ENCODE measurements at regions of chr15 and their contacts with region 1.

Region 1: GRCh38 chr15:84716036-84716799 is at the start of gene SEC11A:
- DNase-seq: peak; percentile 91 to 95
- H3K4me3 ChIP-seq: peak within 1 kb of the TSS; percentile 67
- H3K27ac ChIP-seq: peak within 1 kb of the TSS; percentile 85
- H3K4me1 ChIP-seq: peaks cover 15% of the 10 kb centered on the region
- H3K27me3 ChIP-seq: no peaks in the 10 kb centered on the region
- CTCF ChIP-seq: no peak
- total RNA-seq, gene SEC11A: 146 and 174 TPM in 2 replicates

Region 2: DNA sequence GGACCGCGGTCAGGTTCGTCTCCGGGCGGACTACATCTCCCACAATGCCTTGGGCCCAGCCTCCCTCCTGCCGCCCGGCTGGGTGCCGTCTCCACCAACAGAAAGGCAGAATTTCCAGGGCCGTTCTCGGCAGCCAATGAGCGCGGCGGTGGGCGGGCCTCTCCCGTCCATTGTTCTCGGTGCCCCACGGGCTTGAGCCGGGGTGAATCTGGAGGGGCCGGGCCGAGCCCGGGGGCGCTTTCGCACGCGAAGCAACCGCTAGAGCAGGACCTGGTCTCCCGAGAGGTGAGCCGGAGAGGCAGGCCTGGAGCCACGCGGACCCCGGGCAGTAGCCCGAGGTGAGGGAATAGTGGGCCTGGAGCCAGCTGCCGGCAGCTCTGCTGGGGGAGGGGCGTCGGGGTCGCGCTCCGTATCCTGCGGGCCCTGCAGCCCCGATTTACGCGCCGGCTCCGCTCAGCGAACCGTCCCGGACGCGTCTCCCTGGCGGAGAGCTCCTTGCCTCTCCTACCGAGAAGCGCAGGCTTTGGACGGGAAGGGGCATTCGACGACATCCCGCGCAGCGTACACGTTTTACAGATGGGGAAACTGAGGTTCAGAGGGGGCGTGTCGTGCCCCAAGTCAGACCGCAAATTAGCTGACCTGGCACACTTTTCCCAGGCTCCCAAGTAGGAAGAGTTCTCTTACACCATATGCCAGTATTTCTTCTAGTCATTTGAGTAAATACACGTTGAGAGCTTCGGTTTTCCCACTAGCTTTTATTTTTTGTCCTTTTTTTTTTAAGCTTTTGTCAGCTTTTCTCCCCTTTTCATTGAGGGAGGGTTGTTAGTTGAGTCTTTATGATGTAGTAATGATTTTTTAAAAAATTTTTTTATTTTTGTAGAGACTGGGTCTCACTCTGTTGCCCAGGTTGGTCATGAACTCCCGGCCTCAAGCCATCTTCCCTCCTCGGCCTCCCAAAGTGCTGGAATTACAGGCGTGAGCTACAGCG is 115.1 kb before region 1 on chr15 and contains the start of gene ZSCAN2:
- CTCF ChIA-PET with region 1: no interaction called
- POLR2A ChIA-PET with region 1: no interaction called
- intact Hi-C with region 1: loop called (anchors 5 kb)
- DNase-seq: peak; percentile 87 to 94
- H3K4me3 ChIP-seq: peak within 1 kb of the TSS; percentile 88
- H3K27ac ChIP-seq: peak within 1 kb of the TSS; percentile 24; the same call in 1 of the 2 replicates
- H3K4me1 ChIP-seq: peaks cover 6% of the 10 kb centered on the region
- H3K27me3 ChIP-seq: no peaks in the 10 kb centered on the region
- CTCF ChIP-seq: no peak
- total RNA-seq, gene ZSCAN2: 9.7 and 11.3 TPM in 2 replicates

Region 3: GRCh38 chr15:84633311-84634227 is 82.6 kb before region 1 on chr15:
- CTCF ChIA-PET with region 1: no interaction called
- POLR2A ChIA-PET with region 1: interaction called, 10 read pairs
- intact Hi-C with region 1: no loop called
- DNase-seq: peak; percentile 46 to 63
- H3K4me3 ChIP-seq: peak overlapping the region; percentile 70
- H3K27ac ChIP-seq: no peak overlapping the region
- H3K4me1 ChIP-seq: peaks cover 33% of the 10 kb centered on the region
- H3K27me3 ChIP-seq: no peaks in the 10 kb centered on the region
- CTCF ChIP-seq: no peak

Region 4: DNA sequence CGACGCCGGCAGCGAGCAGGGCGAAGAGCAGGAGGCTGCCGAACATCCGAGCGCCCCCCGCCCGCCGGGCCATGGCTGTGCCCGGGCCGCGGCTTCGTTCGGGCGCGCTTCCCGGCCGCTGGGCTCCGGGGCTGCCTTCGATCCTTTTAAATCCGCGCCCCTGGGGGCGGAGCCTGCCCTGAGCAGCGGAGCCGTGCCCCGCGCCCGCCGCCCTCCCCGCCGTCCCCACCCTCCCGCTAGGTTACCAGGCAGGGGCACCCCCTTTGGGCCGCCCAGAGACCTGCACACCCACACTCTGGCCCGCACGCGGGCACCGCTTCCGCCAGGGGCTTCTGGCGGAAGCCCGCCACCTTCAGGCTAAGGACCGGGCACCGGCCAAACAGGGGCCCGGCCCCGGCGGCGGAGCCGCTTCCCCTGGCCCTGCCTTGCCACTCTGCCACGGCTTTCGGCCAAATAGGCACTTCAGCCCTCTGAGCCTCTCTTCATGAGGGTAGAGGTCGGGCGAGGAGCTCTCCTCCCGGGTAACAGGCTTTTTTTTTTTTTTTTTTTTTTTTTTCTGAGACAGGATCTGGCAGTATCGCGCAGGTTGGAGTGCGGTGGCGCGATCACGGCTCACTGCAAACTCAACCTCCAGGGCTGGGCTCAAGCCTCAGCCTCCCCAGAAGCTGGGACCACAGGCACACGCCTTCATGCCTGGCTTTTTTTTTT is 58.0 kb before region 1 on chr15 and contains the start of gene NMB:
- CTCF ChIA-PET with region 1: no interaction called
- POLR2A ChIA-PET with region 1: no interaction called
- intact Hi-C with region 1: no loop called
- DNase-seq: peak; percentile 70 to 88
- H3K4me3 ChIP-seq: peak within 1 kb of the TSS; percentile 70
- H3K27ac ChIP-seq: peak within 1 kb of the TSS; percentile 83
- H3K4me1 ChIP-seq: peaks cover 23% of the 10 kb centered on the region
- H3K27me3 ChIP-seq: no peaks in the 10 kb centered on the region
- CTCF ChIP-seq: peak; percentile 73
- total RNA-seq, gene NMB: 66.7 and 77.1 TPM in 2 replicates

Region 5: GRCh38 chr15:84734794-84735479 is 18.7 kb after region 1 on chr15:
- CTCF ChIA-PET with region 1: interaction called, 7 read pairs
- POLR2A ChIA-PET with region 1: interaction called, 31 read pairs
- intact Hi-C with region 1: loop called (anchors 1 kb)
- DNase-seq: peak; percentile 84 to 94
- H3K4me3 ChIP-seq: peak overlapping the region; percentile 41; the same call in 1 of the 2 replicates
- H3K27ac ChIP-seq: peak overlapping the region; percentile 95
- H3K4me1 ChIP-seq: peaks cover 45% of the 10 kb centered on the region
- H3K27me3 ChIP-seq: no peaks in the 10 kb centered on the region
- CTCF ChIP-seq: no peak

Region 6: DNA sequence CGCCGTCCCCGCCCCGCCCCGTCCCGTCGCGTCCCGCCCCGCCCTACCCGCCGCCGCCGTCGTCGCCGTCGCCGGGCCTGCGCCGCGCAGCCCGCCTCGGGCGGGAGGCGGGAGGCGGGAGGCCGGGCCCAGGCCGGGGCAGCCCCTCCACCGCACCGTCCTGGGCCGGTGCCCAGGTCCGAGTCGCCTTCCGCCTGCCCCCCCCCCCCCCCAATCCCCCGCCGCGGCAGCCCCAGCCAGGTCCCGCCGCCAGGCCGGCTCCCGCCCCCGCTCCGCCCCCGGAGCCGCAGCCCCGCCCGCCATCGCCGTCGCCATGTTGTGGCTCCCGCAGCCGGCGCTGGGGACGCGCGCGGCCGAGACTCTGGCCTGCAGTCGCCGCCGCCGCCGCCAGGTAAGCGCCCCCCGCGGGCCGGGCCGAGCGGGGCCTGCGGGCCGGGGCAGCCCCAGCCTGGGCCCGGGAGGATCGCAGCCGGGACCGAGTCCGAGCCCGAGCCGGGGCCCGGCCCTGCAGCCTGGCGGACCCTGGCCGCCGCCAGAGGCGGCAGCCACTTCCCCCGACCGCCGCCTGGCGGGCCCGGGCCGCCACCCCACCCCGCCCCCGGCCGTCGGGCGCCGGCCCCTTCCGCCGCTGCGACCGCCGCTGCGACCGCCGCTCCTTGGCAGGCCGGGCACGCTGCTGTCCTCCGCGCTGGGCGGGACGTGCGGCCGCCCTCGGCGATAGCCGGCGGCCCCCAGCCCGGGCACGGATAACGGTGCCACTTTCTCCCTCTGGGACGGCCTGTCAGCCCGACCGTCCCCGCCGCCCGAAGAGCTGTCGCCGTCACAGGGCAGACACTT is 32.3 kb after region 1 on chr15 and contains the start of gene ZNF592:
- CTCF ChIA-PET with region 1: interaction called, 15 read pairs
- POLR2A ChIA-PET with region 1: interaction called, 3 read pairs
- intact Hi-C with region 1: loop called (anchors 1 kb)
- DNase-seq: peak in 1 of 2 experiments; percentile 82
- H3K4me3 ChIP-seq: peak within 1 kb of the TSS; percentile 91
- H3K27ac ChIP-seq: peak within 1 kb of the TSS; percentile 79
- H3K4me1 ChIP-seq: peaks cover 39% of the 10 kb centered on the region
- H3K27me3 ChIP-seq: no peaks in the 10 kb centered on the region
- CTCF ChIP-seq: no peak; the same call in 1 of the 2 replicates
- total RNA-seq, gene ZNF592: 20.8 and 27.5 TPM in 2 replicates

Region 7: GRCh38 chr15:84773716-84774115 is 57.5 kb after region 1 on chr15:
- CTCF ChIA-PET with region 1: no interaction called
- POLR2A ChIA-PET with region 1: no interaction called
- intact Hi-C with region 1: no loop called
- DNase-seq: no peak
- H3K4me3 ChIP-seq: no peak overlapping the region
- H3K27ac ChIP-seq: no peak overlapping the region
- H3K4me1 ChIP-seq: no peaks in the 10 kb centered on the region
- H3K27me3 ChIP-seq: no peaks in the 10 kb centered on the region
- CTCF ChIP-seq: no peak

Region 8: DNA sequence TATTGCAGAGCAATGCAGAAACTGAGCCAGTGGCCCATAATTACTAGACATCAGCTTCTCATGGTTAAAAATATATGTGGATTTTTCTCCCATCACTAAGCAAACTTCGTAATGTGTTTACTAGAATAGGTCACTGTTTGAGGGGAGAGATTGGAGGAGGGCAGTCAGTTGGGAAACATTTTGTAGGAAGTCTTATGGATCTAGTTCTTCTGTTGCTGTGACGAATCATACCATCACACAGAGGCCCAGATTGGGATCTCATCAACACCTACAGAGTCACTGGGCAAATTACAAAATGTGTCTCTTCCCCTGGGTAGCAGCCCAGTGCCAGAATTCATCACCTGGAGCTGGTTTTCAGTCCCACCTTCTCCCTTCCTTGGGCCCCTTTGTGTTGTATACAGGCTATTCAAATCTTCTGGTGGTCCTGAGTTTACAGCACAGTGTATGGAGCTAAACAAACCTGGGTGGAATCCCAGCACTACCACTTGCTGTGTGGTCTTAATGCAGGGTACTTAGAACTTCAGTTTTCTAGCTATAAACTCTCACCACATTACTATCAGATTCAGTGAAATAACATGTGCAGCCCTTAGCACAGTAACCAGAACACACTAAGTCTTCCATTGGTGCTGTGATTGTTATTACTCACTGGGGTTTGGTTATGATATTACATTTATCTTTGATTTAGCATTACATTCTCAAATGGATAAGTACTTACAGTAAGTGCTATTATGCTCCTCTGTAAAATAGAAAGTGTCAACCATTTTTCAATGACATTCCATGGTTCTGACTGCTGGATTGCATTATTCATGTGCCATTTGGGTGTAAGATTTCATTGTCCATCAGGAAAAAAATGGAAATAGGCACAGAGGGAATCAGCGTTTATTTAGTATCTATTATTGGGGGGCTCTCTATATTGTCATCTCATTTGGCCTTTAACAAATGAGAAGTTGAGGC is 347.2 kb after region 1 on chr15:
- CTCF ChIA-PET with region 1: no interaction called
- POLR2A ChIA-PET with region 1: no interaction called
- intact Hi-C with region 1: no loop called
- DNase-seq: no peak
- H3K4me3 ChIP-seq: no peak overlapping the region
- H3K27ac ChIP-seq: no peak overlapping the region
- H3K4me1 ChIP-seq: no peaks in the 10 kb centered on the region
- H3K27me3 ChIP-seq: no peaks in the 10 kb centered on the region
- CTCF ChIP-seq: no peak

Region 9: GRCh38 chr15:85116066-85116465 is 399.8 kb after region 1 on chr15:
- CTCF ChIA-PET with region 1: no interaction called
- POLR2A ChIA-PET with region 1: interaction called, 16 read pairs
- intact Hi-C with region 1: no loop called
- DNase-seq: peak; percentile 71 to 79
- H3K4me3 ChIP-seq: no peak overlapping the region
- H3K27ac ChIP-seq: peak overlapping the region; percentile 33; the same call in 1 of the 2 replicates
- H3K4me1 ChIP-seq: peaks cover 9% of the 10 kb centered on the region; the same call in 1 of the 2 replicates
- H3K27me3 ChIP-seq: no peaks in the 10 kb centered on the region
- CTCF ChIP-seq: no peak